Left ventricle myocardium superior (tissue), 1 donor: ENCODE measurements at regions of chr15 and their contacts with region 1.

Region 1: DNA sequence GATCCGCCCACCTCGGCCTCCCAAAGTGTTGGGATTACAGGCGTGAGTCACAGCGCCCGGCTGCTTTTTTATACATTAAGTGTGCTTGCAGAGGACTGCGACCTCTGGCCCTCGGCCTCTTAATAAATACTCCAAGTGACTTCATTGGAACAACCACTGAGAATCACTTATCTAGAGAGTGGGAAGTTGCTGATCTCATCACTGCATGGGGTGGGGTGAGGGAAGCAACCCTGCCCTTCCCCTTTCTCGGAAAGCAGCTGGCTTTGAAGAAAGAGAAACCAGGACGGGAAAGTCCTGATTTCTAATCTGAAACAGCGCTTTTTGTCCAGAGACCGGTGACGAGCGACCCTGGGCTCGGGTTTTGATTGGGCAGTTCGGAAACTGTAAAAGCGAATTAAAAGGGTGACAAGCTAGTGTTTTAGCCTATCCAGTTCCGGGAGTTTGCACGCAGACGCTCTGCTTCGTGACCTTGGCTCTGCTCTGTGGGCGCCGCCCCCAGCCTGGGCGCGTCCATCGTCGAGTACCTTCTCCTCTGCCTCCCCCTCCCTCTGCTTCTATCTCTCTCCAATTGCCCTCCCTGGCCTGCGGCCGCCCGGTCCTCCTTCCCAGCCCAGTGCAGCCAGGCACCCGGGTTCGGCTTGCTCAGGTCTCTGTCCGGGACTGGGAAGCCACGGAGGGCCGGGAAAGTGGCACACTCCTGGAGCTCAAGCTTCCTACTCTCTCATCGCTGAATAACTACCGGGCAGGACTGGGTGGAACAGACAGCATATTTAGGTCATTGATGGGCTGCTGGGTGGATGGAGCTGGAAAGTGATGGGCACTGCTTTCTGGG is 7.5 kb upstream of the TRIM69 start:
- DNase-seq: peak; percentile 96
- ATAC-seq: peak; percentile 97

Region 2: GRCh38 chr15:44711356-44712107 is 17.3 kb before region 1 on chr15 and contains the start of gene B2M:
- intact Hi-C with region 1: loop called (anchors 2 kb)
- DNase-seq: peak; percentile 97
- ATAC-seq: peak; percentile 96
- total RNA-seq, gene B2M: 1,156 TPM